AG04449 (cell line): ENCODE measurements at regions of chr6 and their contacts with region 1.

Region 1: GRCh38 chr6:45930420-45931040 is 85.1 kb downstream of the CLIC5 start:
- DNase-seq: no peak
- H3K4me3 ChIP-seq: no peak overlapping the region
- CTCF ChIP-seq: peak; percentile 94

Region 2: GRCh38 chr6:45901767-45902650 is 28.5 kb before region 1 on chr6:
- CTCF ChIA-PET with region 1: interaction called, 10 read pairs
- POLR2A ChIA-PET with region 1: no interaction called
- DNase-seq: no peak
- H3K4me3 ChIP-seq: no peak overlapping the region
- CTCF ChIP-seq: no peak

Region 3: DNA sequence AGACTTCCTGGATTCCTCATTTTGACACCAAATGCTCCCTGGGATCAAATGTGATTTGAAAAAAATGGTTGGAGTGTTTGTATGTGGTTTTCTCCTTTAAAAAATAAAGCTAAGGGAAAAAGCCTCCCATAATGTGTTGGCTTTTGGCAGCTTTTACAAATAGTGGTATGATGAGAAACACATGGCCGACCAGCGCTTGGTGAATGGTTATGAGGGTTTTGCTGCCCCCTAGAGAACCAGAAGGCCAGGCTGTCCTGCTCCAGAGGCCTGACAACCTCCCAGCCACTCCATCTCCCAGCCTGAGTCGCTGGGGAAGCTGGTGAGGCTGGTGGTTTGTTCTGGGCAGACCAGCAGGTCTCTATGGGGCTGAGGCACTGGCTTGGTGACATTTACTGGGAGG is 15.8 kb after region 1 on chr6:
- CTCF ChIA-PET with region 1: interaction called, 106 read pairs
- POLR2A ChIA-PET with region 1: no interaction called
- DNase-seq: no peak
- H3K4me3 ChIP-seq: no peak overlapping the region
- CTCF ChIP-seq: peak; percentile 77

Region 4: DNA sequence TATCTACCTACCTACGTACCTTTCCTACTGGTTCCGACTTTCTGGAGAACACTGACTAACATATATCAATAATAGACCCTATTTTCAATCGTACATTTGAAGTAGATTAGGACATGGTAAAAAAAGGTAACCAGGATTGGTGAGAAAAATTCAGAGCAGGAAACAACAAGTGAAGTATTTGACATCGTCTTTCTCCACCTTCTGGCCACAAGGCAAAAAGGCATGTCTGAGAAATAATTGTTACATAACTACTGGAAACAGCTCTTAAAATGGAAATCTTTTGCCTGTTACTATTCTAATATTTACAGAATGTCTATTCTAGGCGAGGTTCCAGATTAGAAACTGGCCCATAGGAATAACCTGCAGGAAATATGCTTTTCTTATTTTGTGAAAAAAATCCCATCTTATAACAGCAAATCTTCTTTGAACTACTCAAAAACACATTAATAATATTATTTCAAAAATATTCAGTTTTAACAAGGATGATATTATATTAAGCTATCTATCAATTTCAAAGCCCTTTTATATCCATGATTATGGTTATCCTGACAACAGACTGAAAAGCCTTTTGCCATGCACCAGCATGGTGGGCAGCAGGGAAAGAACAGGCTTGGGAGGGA is 479.9 kb after region 1 on chr6:
- CTCF ChIA-PET with region 1: interaction called, 12 read pairs
- POLR2A ChIA-PET with region 1: no interaction called
- DNase-seq: no peak
- H3K4me3 ChIP-seq: no peak overlapping the region
- CTCF ChIP-seq: peak; percentile 41